WTC11 (cell line): ENCODE measurements at regions of chr1 and their contacts with region 1.

Region 1: GRCh38 chr1:86913896-86914634 is at the start of gene SELENOF:
- DNase-seq: peak; percentile 100
- ATAC-seq: peak; percentile 93
- H3K4me3 Mint-ChIP-seq: no peak within 1 kb of the TSS
- H3K27ac Mint-ChIP-seq: no peak within 1 kb of the TSS
- H3K4me1 Mint-ChIP-seq: peaks cover 32% of the 10 kb centered on the region
- H3K27me3 Mint-ChIP-seq: no peaks in the 10 kb centered on the region
- CTCF ChIP-seq: no peak
- total RNA-seq, gene SELENOF: 152 to 156 TPM (median 156 TPM) in 3 replicates

Region 2: DNA sequence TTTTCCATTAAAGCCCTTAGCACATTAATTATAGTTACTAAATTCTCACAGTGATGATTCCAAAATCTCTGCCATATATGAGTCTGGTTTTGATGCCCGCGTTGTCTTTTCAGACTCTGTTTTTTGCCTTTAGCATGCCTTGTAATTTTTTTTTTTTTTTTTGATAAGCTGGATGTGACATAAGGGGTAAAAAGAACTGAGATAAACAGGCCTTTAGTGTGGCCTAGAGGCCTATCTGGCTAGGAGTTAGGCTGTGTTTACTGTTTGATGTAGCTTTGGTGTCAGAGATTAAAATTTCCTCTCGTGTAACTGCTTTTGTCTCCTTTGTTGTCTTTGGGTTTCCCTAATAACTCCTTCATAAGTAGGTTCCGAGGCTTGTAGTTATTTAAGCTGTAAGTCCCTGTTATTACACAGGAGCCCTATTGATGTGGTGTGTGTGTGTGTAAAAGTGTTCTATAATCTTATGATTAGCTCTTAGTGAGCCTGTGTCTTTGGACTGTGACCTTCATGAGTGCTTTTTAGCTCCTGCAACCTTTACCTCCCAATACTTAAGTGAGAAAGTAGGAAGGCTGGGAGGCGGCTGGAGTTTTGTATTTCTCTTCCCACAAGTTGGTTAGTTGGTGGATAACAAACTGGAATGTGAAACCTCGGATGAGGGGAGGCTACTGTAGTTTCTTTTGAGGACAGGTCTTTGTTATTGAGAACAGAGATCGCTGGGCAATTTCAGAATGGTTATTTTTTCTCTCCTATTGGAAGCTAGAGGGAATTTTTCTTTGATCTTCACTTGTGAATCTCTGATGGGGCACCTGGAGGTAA is 19.7 kb after region 1 on chr1:
- CTCF ChIA-PET with region 1: interaction called, 6 read pairs
- POLR2A ChIA-PET with region 1: interaction called, 30 read pairs
- DNase-seq: no peak
- ATAC-seq: peak; percentile 74
- H3K4me3 Mint-ChIP-seq: peak overlapping the region; percentile 58
- H3K27ac Mint-ChIP-seq: peak overlapping the region; percentile 99
- H3K4me1 Mint-ChIP-seq: peaks cover 55% of the 10 kb centered on the region
- H3K27me3 Mint-ChIP-seq: no peaks in the 10 kb centered on the region
- CTCF ChIP-seq: no peak